ENCODE measurements at regions of chr3 and their contacts with region 1.

Region 1: DNA sequence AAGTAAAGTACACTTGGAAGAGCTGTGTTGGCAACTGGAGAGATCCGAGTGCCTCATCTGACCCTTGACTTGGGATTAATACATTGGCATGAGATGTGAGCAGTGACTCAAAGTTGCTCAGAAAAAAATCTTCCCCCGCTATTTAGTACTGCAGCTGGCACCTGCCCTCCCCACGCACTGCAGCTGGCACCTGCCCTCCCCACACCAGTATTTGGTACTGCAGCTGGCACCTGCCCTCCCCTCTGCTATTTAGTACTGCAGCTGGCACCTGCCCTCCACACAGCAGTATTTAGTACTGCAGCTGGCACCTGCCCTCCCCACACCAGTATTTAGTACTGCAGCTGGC is 3.9 kb upstream of the MUC20 start:
- DNase-seq: no peak
- H3K4me3 ChIP-seq: no peak overlapping the region
- H3K4me1 ChIP-seq: no peaks in the 10 kb centered on the region
- H3K27me3 ChIP-seq: no peaks in the 10 kb centered on the region

Region 2: DNA sequence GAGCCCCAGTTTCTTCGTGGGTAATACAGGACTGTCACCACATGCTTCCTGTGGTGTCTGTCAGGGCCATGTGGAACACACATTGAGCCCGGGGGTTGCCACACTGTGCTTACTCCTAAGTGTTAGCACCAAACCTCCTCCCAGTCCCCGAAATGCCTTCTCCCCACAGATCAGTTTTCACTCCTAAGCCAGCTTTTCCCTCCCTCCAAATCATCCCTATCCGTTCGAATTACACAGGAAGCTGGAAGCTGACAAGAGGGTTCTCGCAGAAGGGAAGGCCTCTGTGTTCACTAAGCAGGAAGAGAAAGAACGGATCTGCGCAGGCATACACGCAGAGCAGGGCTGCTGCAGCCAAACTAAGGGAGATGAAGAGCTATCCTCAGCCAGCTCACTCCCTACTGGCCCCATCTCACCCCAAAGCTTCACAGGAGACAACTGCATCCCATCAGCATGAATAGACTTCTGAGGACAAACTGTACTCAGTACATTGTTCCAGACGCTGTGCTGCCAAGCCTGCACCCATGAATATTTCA is 478.2 kb before region 1 on chr3:
- in situ Hi-C with region 1: no loop called
- DNase-seq: no peak
- H3K4me3 ChIP-seq: no peak overlapping the region
- H3K4me1 ChIP-seq: no peaks in the 10 kb centered on the region
- H3K27me3 ChIP-seq: no peaks in the 10 kb centered on the region

Region 3: GRCh38 chr3:195886181-195887141 is 169.6 kb after region 1 on chr3:
- in situ Hi-C with region 1: no loop called
- DNase-seq: no peak
- H3K4me3 ChIP-seq: no peak overlapping the region
- H3K4me1 ChIP-seq: no peaks in the 10 kb centered on the region
- H3K27me3 ChIP-seq: no peaks in the 10 kb centered on the region

Region 4: GRCh38 chr3:196502775-196503195 is 785.9 kb after region 1 on chr3:
- in situ Hi-C with region 1: loop called (anchors 25 kb)
- DNase-seq: peak in 1 of 2 experiments; percentile 55
- H3K4me3 ChIP-seq: peak overlapping the region; percentile 95
- H3K4me1 ChIP-seq: peaks cover 9% of the 10 kb centered on the region
- H3K27me3 ChIP-seq: no peaks in the 10 kb centered on the region

Measured in HAP-1 (cell line).